Gastrocnemius medialis (tissue), 4 donors: ENCODE measurements at regions of chr15 and their contacts with region 1.

Region 1: DNA sequence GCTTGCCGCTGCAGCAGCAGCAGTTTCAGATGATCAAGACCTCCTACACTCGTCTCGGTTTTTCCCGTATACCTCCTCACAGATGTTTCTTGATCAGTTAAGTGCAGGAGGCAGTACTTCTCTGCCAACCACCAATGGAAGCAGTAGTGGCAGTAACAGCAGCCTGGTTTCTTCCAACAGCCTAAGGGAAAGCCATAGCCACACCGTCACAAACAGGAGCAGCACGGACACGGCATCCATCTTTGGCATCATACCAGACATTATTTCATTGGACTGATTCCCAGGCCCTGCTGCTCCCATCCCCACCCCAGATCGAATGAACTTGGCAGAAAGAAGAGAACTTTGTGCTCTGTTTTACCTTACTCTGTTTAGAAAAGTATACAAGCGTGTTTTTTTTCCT is 17.6 kb downstream of the CALML4 start:
- DNase-seq: peak; percentile 66 to 68
- ATAC-seq: peak; percentile 75 to 82
- H3K4me3 ChIP-seq: peak overlapping the region in 3 of 4 donors; percentile 2 to 22 (median 9)
- H3K27ac ChIP-seq: peak overlapping the region; percentile 75 to 84 (median 80)
- H3K4me1 ChIP-seq: peaks cover 66 to 75% of the 10 kb centered on the region in 2 donors
- H3K27me3 ChIP-seq: no peaks in the 10 kb centered on the region
- CTCF ChIP-seq: no peak
- POLR2A ChIP-seq: no peak

Region 2: GRCh38 chr15:68229386-68230156 is 42.0 kb after region 1 on chr15 and contains the start of gene CLN6:
- in situ Hi-C with region 1: no loop called
- intact Hi-C with region 1: loop called (anchors 5 kb)
- DNase-seq: peak; percentile 70 to 74
- ATAC-seq: peak; percentile 90 to 93
- H3K4me3 ChIP-seq: peak within 1 kb of the TSS; percentile 65 to 95 (median 80)
- H3K27ac ChIP-seq: peak within 1 kb of the TSS; percentile 83 to 94 (median 88)
- H3K4me1 ChIP-seq: peaks cover 4 to 12% of the 10 kb centered on the region in 2 donors
- H3K27me3 ChIP-seq: no peaks in the 10 kb centered on the region
- CTCF ChIP-seq: peak in 1 of 5 experiments; percentile 37
- POLR2A ChIP-seq: peak; percentile 68 to 79
- total RNA-seq, gene CLN6: 17.1 to 18.9 (median 18.5) TPM